GM12878 (cell line): ENCODE measurements at regions of chr20 and their contacts with region 1.

Region 1: DNA sequence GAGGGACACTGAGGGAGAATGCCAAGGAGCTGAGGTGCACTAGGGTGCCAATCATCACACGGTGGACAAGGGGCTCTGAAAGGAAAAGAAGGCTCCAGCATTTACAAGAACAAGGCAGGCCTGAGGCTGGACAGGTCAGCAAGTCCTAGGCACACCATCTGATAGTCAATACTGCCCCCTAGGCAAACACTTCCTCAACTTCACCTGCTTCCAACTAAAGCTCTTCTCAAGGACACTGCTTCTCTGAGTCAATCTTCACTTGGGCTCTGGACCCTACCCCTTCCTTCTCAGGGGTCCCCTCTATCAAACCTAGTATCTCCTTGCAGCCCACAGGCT is 37.7 kb upstream of the SLC4A11 start:
- DNase-seq: no peak
- ATAC-seq: peak; percentile 83
- H3K4me3 ChIP-seq: no peak overlapping the region
- H3K27ac ChIP-seq: no peak overlapping the region
- H3K4me1 ChIP-seq: no peaks in the 10 kb centered on the region
- H3K27me3 ChIP-seq: no peaks in the 10 kb centered on the region
- CTCF ChIP-seq: peak in 2 of 3 experiments; percentile 33 to 40; a peak in 4 of 6 replicates
- EP300 ChIP-seq: no peak
- POLR2A ChIP-seq: no peak
- RAD21 ChIP-seq: peak; percentile 51

Region 2: DNA sequence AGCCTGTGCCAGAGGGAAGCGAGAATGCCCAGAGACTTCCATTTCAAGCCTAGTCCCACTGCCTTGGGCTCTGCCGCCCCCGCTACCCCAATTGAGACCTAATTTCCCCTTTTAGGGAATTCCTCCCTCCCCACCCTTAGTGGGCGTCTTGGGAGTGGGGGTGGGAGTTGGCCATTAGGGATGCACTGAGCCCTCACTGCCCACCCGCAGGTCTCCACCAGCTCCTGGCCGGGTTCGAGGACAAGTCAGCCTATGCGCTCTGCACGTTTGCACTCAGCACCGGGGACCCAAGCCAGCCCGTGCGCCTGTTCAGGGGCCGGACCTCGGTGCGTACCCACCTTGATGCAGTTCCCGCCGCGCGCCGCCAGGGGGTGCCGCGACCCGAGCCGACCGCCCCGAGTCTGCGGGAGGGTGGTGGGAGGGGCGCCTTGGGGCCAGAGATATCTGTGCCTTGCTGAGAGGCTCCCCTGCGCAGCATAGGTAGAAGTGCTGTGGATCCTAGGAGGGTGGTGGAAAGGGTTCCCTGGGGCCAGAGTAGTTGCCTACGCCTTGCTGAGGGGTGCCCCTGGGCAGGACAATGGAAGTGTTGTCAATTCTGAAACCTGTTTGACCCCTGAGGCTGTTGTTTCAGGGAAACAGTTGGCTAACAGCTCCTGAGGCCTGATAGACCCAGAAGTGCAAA is 58.2 kb before region 1 on chr20:
- CTCF ChIA-PET with region 1: interaction called, 14 read pairs
- POLR2A ChIA-PET with region 1: no interaction called
- RAD21 ChIA-PET with region 1: no interaction called
- SMC1A ChIA-PET with region 1: interaction called, 4 read pairs
- in situ Hi-C with region 1: no loop called
- intact Hi-C with region 1: loop called (anchors 2 kb)
- DNase-seq: no peak
- ATAC-seq: peak; percentile 98
- H3K4me3 ChIP-seq: no peak overlapping the region
- H3K27ac ChIP-seq: no peak overlapping the region
- H3K4me1 ChIP-seq: peaks cover 15% of the 10 kb centered on the region
- H3K27me3 ChIP-seq: no peaks in the 10 kb centered on the region
- CTCF ChIP-seq: peak; percentile 78 to 89 (median 87)
- EP300 ChIP-seq: no peak
- POLR2A ChIP-seq: no peak
- RAD21 ChIP-seq: peak; percentile 76

Region 3: DNA sequence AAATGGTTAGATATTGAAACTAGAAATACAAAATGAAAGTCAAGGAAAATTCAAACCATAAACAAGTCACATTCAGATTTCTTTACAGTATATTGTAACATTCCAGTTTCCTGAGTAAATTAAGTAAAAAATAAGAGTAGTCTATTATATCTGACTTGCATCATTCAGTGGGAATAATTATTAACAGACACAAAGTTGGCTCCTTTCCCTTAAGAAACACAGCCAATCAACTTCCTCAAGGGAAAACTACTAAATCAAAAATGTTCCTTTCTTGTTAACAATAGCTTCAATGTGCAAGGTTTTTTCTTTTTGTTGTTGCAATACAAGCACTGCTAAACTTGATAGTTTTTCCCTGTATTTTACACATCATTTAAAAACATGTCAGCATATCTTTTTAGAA is 97.6 kb after region 1 on chr20:
- CTCF ChIA-PET with region 1: no interaction called
- POLR2A ChIA-PET with region 1: no interaction called
- RAD21 ChIA-PET with region 1: no interaction called
- SMC1A ChIA-PET with region 1: no interaction called
- in situ Hi-C with region 1: no loop called
- intact Hi-C with region 1: no loop called
- DNase-seq: no peak
- ATAC-seq: no peak
- H3K4me3 ChIP-seq: no peak overlapping the region
- H3K27ac ChIP-seq: no peak overlapping the region
- H3K4me1 ChIP-seq: no peaks in the 10 kb centered on the region
- H3K27me3 ChIP-seq: no peaks in the 10 kb centered on the region
- CTCF ChIP-seq: no peak
- EP300 ChIP-seq: no peak
- POLR2A ChIP-seq: no peak
- RAD21 ChIP-seq: no peak